ENCODE measurements at regions of chr14 and their contacts with region 1.

Region 1: DNA sequence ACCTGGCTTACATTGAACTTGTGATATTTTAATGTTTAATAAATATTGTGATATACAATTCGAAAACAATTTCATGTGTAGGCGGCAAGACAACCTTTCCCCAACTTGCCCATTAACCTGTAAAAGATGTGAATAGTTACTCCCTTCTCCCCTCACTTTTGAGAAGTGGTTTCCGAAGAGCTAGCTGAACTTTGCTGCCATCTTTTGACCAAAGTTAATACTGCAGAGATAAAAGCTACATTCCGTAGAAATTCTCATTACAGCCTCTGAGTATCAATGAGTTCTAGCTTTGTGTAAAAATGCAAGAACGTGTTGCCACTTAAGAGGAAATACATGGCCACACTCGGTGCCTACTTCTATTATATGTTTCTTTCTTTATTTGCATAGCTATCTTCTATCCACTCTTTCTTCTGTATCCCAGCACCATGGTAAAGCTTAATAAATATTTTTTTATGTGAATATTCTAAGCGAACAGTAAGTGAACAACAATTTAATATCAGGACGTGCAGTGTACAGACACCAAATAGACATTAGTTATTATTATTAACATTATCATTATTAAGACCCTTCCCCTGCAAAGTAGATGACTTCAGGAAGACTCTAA is 105.1 kb upstream of the TMEM260 start:
- DNase-seq: no peak
- H3K4me3 ChIP-seq: no peak overlapping the region
- H3K27ac ChIP-seq: no peak overlapping the region
- H3K27me3 ChIP-seq: peaks cover 8% of the 10 kb centered on the region
- CTCF ChIP-seq: peak; percentile 93

Region 2: GRCh38 chr14:55438066-55438683 is 1036.3 kb before region 1 on chr14:
- CTCF ChIA-PET with region 1: interaction called, 17 read pairs
- POLR2A ChIA-PET with region 1: no interaction called
- DNase-seq: peak; percentile 27
- H3K4me3 ChIP-seq: no peak overlapping the region
- H3K27ac ChIP-seq: no peak overlapping the region
- H3K27me3 ChIP-seq: peaks cover 12% of the 10 kb centered on the region
- CTCF ChIP-seq: peak; percentile 64

Region 3: GRCh38 chr14:55681088-55681487 is 793.4 kb before region 1 on chr14:
- CTCF ChIA-PET with region 1: interaction called, 15 read pairs
- POLR2A ChIA-PET with region 1: no interaction called
- DNase-seq: no peak
- H3K4me3 ChIP-seq: no peak overlapping the region
- H3K27ac ChIP-seq: no peak overlapping the region
- H3K27me3 ChIP-seq: no peaks in the 10 kb centered on the region
- CTCF ChIP-seq: no peak

Region 4: GRCh38 chr14:55707365-55707804 is 767.1 kb before region 1 on chr14:
- CTCF ChIA-PET with region 1: interaction called, 47 read pairs
- POLR2A ChIA-PET with region 1: no interaction called
- DNase-seq: no peak
- H3K4me3 ChIP-seq: no peak overlapping the region
- H3K27ac ChIP-seq: no peak overlapping the region
- H3K27me3 ChIP-seq: no peaks in the 10 kb centered on the region
- CTCF ChIP-seq: peak; percentile 79

Region 5: GRCh38 chr14:55731881-55732498 is 742.5 kb before region 1 on chr14:
- CTCF ChIA-PET with region 1: interaction called, 59 read pairs
- POLR2A ChIA-PET with region 1: no interaction called
- DNase-seq: no peak
- H3K4me3 ChIP-seq: no peak overlapping the region
- H3K27ac ChIP-seq: no peak overlapping the region
- H3K27me3 ChIP-seq: no peaks in the 10 kb centered on the region
- CTCF ChIP-seq: peak; percentile 66

Region 6: DNA sequence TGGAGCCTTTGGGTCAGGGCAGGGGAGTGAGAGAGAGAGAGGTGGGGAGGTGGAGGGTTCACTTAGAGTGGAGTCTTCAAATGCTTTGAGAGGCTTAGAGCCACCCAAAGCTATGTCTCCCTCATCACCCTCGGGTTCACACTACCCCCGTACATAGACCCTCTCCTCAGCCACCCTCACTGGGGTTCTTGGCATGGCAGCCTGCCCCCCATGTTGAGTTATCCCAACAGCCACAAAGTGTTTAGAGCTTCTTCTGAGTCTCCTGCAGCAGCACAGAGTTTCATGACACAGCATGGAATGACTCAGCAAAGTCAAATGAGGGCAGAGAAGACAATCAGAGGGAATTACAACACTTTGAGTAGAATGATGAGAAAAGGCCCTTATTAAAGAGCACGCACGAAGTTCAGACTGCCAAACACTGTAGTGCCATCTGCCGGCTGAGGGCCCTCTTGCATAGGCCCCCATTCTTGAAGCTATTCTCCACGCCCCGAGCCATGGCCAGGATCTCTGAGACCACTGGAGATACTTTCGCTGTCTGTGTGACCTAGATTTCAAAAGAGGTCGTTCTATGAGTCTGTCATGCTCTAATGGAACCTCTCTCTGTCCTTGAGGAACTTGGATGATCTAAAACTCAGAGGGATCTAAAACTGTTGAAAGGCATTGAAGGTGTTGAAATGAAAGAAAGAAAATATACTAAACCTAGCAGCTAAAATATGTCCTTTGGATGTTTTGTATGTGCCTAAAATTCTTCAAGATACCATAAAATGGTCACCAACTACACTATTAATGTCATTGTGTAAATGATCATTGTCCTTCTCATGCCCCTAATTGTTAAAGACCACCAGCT is 134.4 kb before region 1 on chr14:
- CTCF ChIA-PET with region 1: interaction called, 14 read pairs
- POLR2A ChIA-PET with region 1: no interaction called
- DNase-seq: peak; percentile 94
- H3K4me3 ChIP-seq: no peak overlapping the region
- H3K27ac ChIP-seq: peak overlapping the region; percentile 76
- H3K27me3 ChIP-seq: no peaks in the 10 kb centered on the region
- CTCF ChIP-seq: peak; percentile 98

Region 7: DNA sequence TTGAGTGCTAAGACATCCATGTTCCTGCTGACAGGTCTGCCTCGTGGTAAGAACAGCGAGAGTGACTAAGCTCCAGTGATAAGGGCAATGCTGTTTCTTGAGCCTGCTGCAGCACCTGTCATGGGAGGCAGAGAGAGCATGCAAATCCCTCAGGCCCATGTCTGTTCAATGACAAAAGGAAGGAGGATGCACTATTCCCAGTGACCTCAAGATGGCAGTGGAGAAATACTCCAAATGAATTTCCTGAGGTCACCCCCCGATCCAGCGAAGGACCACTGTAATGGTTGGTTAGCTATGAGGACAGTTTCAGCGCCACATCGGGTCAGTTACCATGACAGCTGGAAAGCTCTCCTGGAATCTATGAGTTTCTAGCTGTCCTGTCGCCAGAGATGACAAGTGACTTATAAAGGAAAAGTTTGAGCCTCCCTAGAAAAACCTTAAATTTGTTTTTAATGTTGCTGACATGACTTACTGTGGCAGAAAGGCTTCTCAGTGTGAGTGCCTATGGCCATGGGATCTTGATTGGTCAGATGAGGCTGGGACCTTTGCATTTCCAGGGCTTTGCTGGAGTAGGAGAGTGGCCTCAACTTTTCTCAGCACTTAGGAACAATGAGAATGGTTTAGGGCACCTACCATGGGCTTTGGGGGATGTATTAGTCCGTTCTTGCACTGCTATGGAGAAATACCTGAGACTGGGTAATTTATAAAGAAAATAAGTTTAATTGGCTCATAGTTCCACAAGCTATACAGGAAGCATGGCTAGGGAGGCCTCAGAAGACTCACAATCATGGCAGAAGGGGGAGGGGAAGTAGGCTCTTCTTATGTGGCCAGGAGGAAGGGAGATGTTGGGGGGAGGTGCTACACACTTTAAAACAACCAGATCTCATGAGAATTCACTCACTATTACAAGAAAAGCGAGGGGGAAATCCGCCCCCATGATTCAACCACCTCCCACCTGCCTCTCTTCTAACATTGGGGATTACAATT is 17.1 kb after region 1 on chr14:
- CTCF ChIA-PET with region 1: interaction called, 19 read pairs
- POLR2A ChIA-PET with region 1: no interaction called
- DNase-seq: peak; percentile 16
- H3K4me3 ChIP-seq: no peak overlapping the region; the same call in 1 of the 2 replicates
- H3K27ac ChIP-seq: no peak overlapping the region
- H3K27me3 ChIP-seq: no peaks in the 10 kb centered on the region
- CTCF ChIP-seq: peak; percentile 86